Calu3 (cell line): ENCODE measurements at regions of chr4 and their contacts with region 1.

Region 1: DNA sequence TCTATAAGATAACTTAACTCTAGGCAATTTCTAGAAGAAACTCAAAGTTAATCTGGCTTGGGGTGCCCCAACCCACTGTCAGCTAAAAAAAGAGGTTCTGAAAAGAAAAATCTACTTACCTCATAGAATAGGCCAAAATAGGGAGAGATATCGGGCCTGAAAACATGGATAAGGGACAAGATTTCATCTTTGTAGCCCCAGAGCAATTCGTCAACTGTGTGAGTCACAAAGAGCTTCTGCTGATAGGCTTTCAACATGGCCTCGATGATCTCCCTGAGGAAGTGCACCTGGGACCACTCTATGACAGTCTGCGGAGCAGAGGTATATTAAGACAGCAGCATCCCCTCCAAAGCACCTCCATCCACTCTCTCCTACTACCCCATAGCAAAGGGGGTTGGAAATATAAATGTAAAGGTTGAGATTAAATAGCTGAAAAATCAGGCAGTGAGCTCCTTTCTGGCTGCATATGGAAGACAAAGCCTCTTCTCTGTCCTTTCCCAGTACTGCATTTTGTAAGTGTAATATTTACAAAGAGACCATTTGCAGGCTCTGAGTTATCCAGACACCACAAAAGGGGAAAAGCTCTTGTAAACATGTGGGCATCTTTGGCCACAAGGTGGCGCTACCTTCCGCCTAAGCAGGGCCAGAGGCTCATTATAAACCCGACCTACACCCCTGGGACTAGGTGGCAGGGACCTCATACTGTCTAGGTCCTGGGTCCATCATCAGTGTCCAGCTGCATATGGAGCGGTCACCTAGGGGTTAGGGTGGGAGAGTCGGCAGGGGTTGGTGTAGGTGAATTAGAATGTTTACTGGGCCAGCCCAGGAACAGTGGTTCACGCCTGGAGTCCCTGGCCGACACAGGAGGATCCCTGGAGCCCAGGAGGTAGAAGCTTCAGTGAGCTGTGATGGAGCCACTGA is 31.5 kb upstream of the NUP54 start:
- DNase-seq: peak; percentile 78
- H3K4me3 Mint-ChIP-seq: no peak overlapping the region
- H3K27ac Mint-ChIP-seq: no peak overlapping the region
- H3K4me1 Mint-ChIP-seq: no peaks in the 10 kb centered on the region
- H3K27me3 Mint-ChIP-seq: no peaks in the 10 kb centered on the region
- CTCF ChIP-seq: peak; percentile 79

Region 2: DNA sequence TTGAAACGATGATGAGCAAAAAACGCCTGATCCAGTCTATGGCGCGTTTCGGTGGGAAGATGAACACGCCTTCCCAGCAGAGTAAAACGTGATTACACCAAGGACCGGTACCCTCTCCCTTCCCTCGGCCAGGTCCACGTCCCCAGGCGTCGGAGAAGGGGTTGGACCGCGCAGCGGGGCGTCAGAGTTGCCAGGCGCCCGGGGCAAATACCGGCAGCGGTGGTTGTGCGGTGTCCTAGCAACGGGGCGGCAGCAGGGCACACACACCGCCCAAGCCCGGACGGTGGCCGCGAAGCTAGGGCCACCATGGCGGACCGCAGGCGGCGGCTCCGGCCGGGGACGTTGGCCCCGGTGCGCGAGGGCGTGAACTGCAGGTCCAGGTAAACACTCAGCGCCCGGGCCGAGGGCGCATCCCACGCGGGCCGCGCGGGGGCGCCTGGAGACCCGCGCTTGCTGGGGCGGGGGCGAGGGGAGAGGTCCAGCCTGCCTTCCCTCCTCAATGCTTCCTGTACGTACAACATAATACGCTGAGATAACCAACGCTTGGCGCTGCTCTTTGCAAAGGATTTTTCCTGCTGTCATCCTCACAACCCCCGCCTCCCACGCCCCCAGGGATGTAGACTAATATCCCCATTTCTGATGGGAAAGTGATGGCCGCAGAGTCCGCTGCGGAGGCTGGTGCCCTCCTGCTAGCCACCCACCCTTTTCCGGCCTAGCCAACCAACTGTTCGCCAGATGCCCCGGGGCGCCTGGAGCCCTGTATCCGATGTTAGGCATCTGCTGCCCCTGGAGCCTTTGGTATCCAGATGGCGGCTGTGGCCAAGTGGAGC is 72.0 kb after region 1 on chr4 and contains the start of gene FAM47E:
- CTCF ChIA-PET with region 1: interaction called, 3 read pairs
- intact Hi-C with region 1: loop called (anchors 5 kb)
- DNase-seq: peak; percentile 80
- H3K4me3 Mint-ChIP-seq: peak within 1 kb of the TSS; percentile 82
- H3K27ac Mint-ChIP-seq: peak within 1 kb of the TSS; percentile 67
- H3K4me1 Mint-ChIP-seq: peaks cover 9% of the 10 kb centered on the region
- H3K27me3 Mint-ChIP-seq: no peaks in the 10 kb centered on the region
- CTCF ChIP-seq: peak; percentile 41
- total RNA-seq, gene FAM47E: 0.57 and 1.1 TPM in 2 replicates

Region 3: DNA sequence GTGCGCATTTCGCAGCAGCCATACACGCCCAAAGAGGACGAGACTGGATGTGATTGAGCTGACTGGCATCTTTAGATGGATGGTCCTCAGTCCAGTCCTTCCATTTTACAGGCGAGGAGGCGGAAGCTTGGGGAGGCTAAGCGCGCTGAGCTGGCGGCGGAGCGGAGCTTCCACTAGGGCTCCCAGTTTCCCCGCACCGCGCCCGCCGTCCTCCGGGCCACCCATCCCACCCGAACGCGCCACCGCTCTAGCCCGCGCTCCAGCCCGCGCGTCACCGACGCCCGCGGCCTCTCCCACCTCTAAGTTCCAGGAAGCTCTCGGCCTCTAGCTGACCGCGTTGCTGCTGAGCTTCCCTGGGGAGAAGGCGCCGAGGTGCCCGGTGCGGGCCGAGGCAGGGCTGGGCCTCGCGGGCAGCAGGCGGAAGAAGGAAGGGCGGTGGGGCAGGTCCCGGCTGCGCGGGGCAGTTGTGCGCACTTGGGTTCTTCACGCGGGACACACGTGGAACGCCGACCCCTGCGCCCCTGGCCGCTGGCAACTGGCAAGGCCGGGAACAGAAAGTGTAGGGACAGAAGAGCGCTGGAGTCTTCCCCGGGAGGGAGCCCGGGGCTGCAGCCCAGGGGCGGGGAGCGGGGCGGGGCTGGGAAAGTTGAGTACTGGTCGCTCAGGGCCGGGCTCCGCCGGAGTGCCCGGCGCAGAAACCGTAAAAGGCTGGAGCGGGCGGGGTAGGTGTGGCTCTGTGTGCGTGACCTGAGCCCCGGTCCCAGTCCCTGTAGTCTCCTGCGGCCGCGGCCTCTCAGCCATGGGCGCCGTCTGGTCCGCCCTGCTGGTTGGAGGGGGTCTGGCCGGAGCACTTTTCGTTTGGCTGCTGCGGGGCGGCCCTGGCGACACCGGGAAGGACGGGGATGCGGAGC is 126.6 kb after region 1 on chr4 and contains the start of gene STBD1:
- CTCF ChIA-PET with region 1: interaction called, 16 read pairs
- intact Hi-C with region 1: loop called (anchors 5 kb)
- DNase-seq: peak; percentile 77
- H3K4me3 Mint-ChIP-seq: peak within 1 kb of the TSS; percentile 91
- H3K27ac Mint-ChIP-seq: peak within 1 kb of the TSS; percentile 63
- H3K4me1 Mint-ChIP-seq: peaks cover 43% of the 10 kb centered on the region
- H3K27me3 Mint-ChIP-seq: no peaks in the 10 kb centered on the region
- CTCF ChIP-seq: no peak
- total RNA-seq, gene STBD1: 3.2 and 5.0 TPM in 2 replicates

Region 4: DNA sequence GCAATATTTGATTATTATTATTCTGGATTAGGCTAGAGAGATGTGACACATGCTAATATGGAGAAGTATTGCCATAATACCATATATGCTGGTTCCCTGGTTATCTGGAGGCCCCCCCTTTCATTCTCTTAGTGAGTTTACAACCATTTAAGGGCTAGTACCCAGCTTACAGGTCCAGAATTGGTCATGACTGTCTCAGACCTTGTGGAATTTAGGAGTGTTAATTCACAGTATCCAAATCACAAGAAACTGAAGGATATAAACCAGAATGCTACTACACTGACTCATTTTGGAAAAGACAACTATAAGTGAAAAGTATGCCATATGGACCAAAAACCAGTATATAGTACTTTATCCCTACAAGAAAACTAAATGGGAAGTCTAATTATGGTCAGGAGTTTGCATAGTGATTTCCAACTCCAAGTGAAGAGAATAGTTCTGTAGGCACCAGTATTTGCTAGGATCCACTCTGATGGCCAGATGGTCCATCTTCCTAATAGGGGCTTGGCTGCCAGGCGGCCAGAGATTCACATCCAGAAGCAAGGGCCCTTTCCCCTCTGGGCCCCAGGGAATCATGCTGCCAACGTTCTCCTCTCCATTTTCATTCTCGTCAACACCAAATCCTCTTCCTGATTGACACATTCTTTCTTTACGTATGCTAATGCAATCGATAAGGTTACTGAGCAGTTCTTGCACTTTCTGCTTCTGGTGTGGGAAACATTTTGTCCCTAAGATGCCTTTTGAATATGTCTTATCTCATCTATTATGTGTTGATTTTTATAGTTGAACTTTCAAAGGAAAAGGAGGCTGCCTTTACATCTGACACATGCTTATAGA is 379.0 kb after region 1 on chr4:
- CTCF ChIA-PET with region 1: no interaction called
- intact Hi-C with region 1: no loop called
- DNase-seq: no peak
- H3K4me3 Mint-ChIP-seq: peak overlapping the region; percentile 30
- H3K27ac Mint-ChIP-seq: peak overlapping the region; percentile 82
- H3K4me1 Mint-ChIP-seq: peaks cover 34% of the 10 kb centered on the region
- H3K27me3 Mint-ChIP-seq: no peaks in the 10 kb centered on the region
- CTCF ChIP-seq: no peak